Ascending aorta (tissue), 2 donors: ENCODE measurements at regions of chr6 and their contacts with region 1.

Region 1: GRCh38 chr6:10954590-10955010 is 67.7 kb downstream of the SYCP2L start:
- DNase-seq: peak in 1 of 2 donors; percentile 68
- H3K4me3 ChIP-seq: no peak overlapping the region
- H3K27ac ChIP-seq: no peak overlapping the region
- H3K4me1 ChIP-seq: no peaks in the 10 kb centered on the region
- H3K27me3 ChIP-seq: no peaks in the 10 kb centered on the region
- CTCF ChIP-seq: peak; percentile 11 to 34 (median 14)

Region 2: DNA sequence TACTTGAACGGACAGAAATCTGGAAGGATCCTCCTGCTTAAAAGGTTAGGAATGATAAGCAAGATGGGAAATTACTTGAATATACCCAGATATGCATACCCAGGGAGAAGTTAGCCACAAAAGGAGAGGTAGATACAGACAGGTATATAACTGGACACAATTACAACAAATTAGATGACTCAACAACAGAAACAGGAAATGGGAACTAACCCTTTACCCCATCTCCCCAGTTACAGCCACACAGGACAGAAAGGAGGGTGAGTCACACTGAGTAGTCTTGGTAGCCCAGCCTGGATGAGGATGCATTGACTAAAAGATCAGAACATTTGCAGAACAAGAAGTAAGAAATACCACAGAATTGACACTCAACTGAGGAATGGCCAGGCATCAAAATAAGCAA is 321.4 kb before region 1 on chr6:
- intact Hi-C with region 1: no loop called
- DNase-seq: no peak
- H3K4me3 ChIP-seq: no peak overlapping the region
- H3K27ac ChIP-seq: no peak overlapping the region
- H3K4me1 ChIP-seq: no peaks in the 10 kb centered on the region
- H3K27me3 ChIP-seq: no peaks in the 10 kb centered on the region
- CTCF ChIP-seq: no peak

Region 3: DNA sequence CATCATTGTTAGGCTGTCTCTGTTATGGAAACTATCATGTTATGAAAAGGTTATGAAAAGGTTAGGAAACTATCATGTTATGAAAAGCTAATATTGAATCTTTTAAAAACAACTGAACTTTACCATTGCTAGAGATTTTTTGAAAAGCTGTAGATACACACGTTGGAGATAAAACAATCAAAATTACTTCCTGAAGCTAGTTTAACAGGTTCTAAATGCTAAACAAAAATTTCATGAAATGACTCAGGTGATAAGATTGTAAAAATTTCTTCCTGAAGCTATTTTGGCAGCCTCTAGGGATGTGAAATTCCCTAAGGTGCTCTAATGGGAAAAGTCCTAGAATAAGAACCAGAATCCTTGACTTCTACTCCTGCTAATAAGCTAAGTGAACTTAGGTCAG is 81.3 kb before region 1 on chr6:
- intact Hi-C with region 1: no loop called
- DNase-seq: no peak
- H3K4me3 ChIP-seq: no peak overlapping the region
- H3K27ac ChIP-seq: no peak overlapping the region
- H3K4me1 ChIP-seq: no peaks in the 10 kb centered on the region
- H3K27me3 ChIP-seq: no peaks in the 10 kb centered on the region
- CTCF ChIP-seq: no peak

Region 4: DNA sequence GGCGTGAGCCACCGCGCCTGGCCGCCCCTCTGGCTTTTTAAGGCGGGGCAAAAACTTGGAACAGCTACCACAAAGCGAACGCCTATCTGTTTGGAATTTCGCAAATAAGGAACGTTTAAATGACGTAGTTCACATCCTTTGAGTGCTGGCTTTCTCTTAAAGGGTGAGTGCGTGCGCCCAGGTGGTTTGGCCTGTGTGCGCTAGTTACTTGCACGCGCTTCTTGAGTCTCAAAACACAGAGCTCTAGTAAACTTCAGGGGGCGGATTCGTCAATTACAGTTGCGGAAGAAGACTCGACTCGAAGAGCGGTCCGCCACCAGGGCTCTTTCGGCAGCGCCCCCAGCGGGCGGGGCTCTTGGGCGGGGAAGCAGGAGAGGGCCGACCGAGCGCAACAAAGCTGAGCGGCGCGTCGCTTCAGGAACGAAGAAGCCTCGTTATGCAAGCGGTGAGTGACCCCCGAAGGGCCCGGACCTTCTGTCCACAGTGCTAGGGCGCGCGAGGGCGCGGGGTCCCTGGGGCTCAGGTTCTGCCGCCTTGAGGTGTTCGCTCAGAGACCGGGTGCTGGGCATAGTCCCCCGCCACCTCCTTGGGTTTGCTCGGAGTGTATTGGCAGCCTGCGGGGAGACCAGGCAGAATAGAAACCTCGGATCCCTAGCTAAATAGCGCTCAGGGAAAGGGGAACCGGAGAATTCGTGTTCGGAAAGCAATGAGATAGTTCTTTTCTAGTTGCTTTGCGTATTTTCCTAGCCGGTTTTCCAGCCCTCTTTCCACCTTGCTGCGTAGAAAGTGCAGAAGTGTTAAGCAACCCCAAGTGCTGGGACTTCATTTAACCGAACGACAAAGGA is 67.7 kb before region 1 on chr6 and contains the start of gene SYCP2L:
- intact Hi-C with region 1: no loop called
- DNase-seq: no peak
- H3K4me3 ChIP-seq: peak within 1 kb of the TSS; percentile 32 to 39
- H3K27ac ChIP-seq: no peak within 1 kb of the TSS
- H3K4me1 ChIP-seq: peaks cover 0 to 5% of the 10 kb centered on the region in 2 donors
- H3K27me3 ChIP-seq: peaks cover 28% of the 10 kb centered on the region
- CTCF ChIP-seq: no peak
- total RNA-seq, gene SYCP2L: 0.32 TPM

Region 5: DNA sequence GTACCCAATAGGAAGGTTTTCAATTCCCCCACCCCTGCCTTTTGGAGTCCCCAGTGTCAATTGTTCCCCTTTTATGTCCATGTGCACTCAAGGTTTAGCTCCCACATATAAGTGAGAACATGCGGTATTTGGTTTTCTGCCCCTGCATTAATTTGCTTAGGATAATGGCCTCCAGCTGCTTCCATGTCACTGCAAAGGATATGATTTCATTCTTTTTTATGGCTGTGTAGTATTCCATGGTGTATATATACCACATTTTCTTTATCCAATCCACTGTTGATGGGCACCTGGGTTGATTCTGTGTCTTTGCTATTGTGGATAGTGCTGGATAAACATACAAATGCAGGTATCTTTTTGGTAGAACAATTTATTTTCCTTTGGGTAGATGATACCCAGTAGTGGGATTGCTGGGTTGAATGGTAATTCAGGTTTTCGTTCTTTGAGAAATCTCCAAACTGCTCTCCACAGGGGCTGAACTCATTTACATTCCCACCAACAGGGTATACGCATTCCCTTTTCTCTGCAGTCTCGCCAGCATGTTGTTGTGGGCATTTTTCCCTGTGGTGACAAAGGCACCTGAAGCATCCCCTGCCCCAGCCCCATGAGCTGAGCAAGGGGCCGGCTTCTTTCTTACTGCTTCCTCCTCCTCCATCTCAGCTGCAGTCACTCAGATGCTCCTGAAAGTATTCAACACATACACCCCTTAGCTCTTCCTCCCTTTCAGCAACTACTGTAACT is 22.8 kb after region 1 on chr6:
- intact Hi-C with region 1: no loop called
- DNase-seq: no peak
- H3K4me3 ChIP-seq: no peak overlapping the region
- H3K27ac ChIP-seq: no peak overlapping the region
- H3K4me1 ChIP-seq: no peaks in the 10 kb centered on the region
- H3K27me3 ChIP-seq: no peaks in the 10 kb centered on the region
- CTCF ChIP-seq: no peak

Region 6: DNA sequence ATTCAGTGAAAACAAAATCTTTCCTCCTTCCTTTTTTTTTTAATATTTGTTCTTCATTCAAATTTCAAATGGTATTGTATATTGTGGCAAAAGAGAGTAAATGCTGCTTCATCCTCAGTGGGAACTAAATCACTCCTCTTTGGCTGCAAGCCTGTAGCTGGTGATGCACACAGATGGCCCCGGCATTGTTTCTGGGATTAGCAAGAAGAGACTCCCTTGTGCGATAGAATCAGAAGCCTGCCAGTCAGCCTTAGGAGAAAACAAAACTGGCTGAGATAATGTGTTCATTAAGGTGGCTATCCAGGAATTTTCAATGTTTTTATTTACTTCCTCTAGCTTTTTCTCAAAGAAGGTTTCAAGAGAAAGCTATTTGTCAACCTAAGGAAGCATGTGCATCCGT is 110.2 kb after region 1 on chr6:
- intact Hi-C with region 1: loop called (anchors 5 kb)
- DNase-seq: no peak
- H3K4me3 ChIP-seq: no peak overlapping the region
- H3K27ac ChIP-seq: no peak overlapping the region
- H3K4me1 ChIP-seq: no peaks in the 10 kb centered on the region
- H3K27me3 ChIP-seq: no peaks in the 10 kb centered on the region
- CTCF ChIP-seq: no peak

Region 7: DNA sequence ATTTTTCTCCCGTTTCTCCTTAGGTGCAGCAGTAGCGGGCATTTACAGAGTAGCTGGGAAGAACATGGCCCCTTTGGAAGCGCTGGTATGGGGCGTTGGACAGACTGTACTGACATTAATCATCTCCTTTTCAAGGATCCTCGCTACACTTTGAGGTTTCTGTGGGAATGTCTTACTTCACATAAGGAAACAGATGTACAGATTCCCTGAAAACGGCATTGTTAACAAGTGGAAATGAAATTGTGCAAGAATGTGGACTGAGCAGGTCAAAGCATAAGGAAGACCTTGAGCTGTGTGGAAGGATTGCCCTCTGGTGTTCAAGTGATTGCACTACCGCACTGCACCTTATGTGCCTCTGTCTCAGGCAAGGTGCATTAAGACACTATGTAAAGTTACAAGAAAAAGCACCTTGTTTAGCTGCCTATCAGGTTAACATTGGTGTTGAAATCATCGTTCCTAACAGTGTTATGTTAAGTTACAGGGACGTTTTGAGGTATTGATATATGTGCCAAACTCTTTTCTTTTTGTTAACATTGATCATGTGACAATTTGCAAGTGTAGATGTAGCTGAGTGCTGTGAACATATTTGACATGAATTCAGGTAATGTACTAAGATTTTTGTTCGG is 620.9 kb after region 1 on chr6:
- intact Hi-C with region 1: loop called (anchors 5 kb)
- DNase-seq: peak in 1 of 2 donors; percentile 74
- H3K4me3 ChIP-seq: peak overlapping the region in 1 of 2 donors; percentile 23
- H3K27ac ChIP-seq: no peak overlapping the region
- H3K4me1 ChIP-seq: no peaks in the 10 kb centered on the region
- H3K27me3 ChIP-seq: no peaks in the 10 kb centered on the region
- CTCF ChIP-seq: peak; percentile 81 to 95 (median 89)